Left colon (tissue), 2 donors: ENCODE measurements at regions of chr9 and their contacts with region 1.

Region 1: DNA sequence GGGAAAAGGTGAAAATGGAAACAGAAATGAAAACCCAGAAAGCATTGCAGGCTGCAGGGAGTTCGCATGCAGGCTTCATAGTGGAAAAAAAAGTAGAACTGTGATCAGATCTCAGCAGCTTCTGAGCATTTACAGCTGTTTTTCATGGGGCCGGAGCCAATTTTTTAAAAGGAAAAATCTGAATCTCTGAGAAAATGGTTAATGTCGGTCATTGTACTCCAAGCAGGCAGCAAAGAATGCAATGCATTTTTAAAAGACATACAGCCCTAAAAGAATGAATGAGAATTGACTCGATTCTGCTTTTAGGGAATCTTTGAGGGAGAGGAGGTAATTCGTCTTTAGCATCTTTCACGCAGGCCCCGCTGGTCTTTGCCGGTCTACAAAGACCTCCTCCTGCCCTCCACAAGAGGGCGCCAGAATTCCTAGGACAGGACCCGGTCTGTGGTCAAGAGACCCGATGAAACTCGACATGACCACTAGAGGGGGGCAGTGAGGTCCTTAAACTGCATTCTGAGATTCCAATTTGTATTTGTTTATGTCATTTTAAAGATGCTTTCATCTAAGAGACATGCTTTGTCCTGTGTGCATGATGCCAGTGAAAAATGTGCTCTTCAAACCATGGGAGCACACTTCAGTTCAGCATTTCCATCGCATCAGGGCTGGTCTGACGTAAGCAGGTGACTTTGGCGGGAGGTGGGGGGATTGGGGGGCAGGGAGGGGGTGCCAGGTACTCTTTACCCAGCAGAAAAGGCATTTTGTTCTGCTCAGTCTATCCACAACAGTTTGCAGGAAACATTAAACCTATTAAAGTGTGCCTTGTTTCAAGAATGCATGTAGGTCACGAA is 43.7 kb upstream of the TMEM252 start:
- DNase-seq: peak; percentile 83 to 88
- ATAC-seq: peak; percentile 98

Region 2: DNA sequence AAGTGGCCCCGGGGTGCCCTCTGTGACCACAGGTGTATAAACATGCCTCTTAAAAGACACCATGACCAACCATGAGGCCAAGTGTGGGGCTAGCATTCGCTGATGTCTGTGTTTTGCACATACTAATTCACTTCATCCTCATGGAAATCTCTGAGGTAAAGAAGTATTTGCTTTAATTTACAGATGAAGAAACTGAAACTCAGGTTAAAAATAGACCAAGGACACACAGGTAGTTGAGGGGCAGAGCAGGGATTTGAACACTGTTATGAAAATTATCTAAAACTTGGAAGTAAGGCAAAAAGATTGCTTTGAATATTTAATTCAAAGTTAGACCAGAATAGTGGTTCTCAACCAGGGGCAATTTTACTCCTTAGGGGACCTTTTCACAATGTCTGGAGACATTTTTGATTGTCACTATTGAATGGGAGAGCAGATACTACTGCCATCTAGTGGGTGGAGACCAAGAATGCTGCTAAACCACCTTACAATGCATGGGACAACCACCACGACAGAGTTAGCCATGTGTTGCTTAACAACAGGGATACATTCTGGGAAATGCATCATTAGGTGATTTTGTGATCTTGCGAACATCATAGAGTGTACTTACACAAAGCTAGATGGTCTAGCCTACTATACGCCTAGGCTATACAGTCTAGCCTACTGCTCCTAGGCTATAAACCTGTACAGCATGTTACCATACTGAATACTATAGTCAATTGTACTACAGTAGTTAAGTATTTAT is 443.1 kb after region 1 on chr9:
- intact Hi-C with region 1: loop called in 1 of 2 experiments (anchors 10 kb)
- DNase-seq: no peak
- ATAC-seq: peak; percentile 85

Region 3: DNA sequence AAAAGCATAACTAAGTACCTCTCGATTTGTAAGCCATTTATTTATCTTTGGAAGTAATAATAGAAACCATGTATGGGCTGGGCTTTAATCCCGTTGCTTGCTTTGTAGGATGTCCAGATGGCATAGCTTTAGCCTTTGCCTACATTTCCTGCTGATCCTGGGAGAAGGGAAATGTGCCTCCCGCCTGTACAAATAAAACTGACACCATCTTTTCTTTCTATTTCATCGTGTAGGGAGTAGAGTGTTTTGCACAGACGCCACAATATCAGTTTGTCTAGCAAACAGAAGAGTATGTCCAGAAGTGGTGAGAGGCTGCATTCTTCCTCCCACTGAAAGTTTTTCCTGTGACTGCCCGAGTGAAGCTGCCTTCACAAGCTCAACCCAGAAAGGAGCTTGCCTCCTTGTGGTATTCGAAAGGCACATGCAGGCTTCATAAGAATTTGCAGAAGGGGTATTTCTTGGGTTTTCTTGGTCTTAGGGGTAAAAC is 565.0 kb after region 1 on chr9:
- intact Hi-C with region 1: no loop called
- DNase-seq: no peak
- ATAC-seq: peak; percentile 45